Left lung (tissue), 14 donors: ENCODE measurements at regions of chr20 and their contacts with region 1.

Region 1: GRCh38 chr20:34955232-34956040 is at the starts of genes GSS and MYH7B:
- DNase-seq: peak; percentile 97 to 100 (median 98)
- ATAC-seq: peak; percentile 98
- H3K4me3 ChIP-seq: peak within 1 kb of the TSS; percentile 65 to 77
- H3K27ac ChIP-seq: peak within 1 kb of the TSS; percentile 89 to 92
- H3K4me1 ChIP-seq: peaks cover 5 to 21% of the 10 kb centered on the region in 2 donors
- H3K27me3 ChIP-seq: no peaks in the 10 kb centered on the region
- CTCF ChIP-seq: peak in 1 of 2 donors; percentile 39
- polyA plus RNA-seq, gene GSS: 37.8 to 50.3 (median 41.0) TPM
- polyA plus RNA-seq, gene MYH7B: 1.6 to 2.7 (median 2.1) TPM

Region 2: GRCh38 chr20:34316191-34316814 is 639.1 kb before region 1 on chr20:
- intact Hi-C with region 1: no loop called
- DNase-seq: no peak
- ATAC-seq: peak; percentile 17
- H3K4me3 ChIP-seq: no peak overlapping the region
- H3K27ac ChIP-seq: no peak overlapping the region
- H3K4me1 ChIP-seq: peaks cover 6 to 18% of the 10 kb centered on the region in 2 donors
- H3K27me3 ChIP-seq: peaks cover 5 to 14% of the 10 kb centered on the region in 2 donors
- CTCF ChIP-seq: no peak

Region 3: DNA sequence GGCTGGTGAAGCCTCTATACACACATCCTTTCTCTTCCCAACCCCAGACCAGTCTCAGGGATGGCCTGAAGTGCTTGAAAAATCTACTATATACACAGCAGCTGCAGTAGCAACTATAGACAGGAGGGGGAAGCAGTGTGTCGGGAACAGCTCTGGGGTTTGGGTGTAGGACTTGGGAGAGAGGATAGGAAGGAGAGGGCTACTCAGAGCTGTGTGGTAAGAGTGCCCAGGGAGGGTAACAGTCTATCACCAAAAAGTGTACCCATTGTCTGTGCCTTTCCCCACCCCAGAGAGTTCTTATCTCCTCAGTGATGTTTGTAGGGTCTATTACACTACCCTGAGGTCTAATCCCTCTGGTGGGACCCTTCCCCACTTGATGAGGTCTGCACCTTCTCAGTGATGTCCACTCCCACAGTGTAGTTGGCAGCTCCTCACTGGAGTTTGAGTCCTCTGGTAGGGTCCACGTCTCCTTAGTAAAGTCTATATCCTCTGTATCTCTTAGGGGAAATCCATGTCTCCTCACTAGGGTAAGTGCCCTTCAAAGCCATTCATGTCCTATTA is 81.3 kb before region 1 on chr20:
- intact Hi-C with region 1: loop called in 1 of 2 experiments (anchors 2 kb)
- DNase-seq: peak in 3 of 4 donors; percentile 61 to 85 (median 73)
- ATAC-seq: peak; percentile 58
- H3K4me3 ChIP-seq: no peak overlapping the region
- H3K27ac ChIP-seq: peak overlapping the region in 1 of 2 donors; percentile 85
- H3K4me1 ChIP-seq: peaks cover 10 to 57% of the 10 kb centered on the region in 2 donors
- H3K27me3 ChIP-seq: no peaks in the 10 kb centered on the region
- CTCF ChIP-seq: peak; percentile 81 to 83